ENCODE measurements at regions of chr16 and their contacts with region 1.

Region 1: DNA sequence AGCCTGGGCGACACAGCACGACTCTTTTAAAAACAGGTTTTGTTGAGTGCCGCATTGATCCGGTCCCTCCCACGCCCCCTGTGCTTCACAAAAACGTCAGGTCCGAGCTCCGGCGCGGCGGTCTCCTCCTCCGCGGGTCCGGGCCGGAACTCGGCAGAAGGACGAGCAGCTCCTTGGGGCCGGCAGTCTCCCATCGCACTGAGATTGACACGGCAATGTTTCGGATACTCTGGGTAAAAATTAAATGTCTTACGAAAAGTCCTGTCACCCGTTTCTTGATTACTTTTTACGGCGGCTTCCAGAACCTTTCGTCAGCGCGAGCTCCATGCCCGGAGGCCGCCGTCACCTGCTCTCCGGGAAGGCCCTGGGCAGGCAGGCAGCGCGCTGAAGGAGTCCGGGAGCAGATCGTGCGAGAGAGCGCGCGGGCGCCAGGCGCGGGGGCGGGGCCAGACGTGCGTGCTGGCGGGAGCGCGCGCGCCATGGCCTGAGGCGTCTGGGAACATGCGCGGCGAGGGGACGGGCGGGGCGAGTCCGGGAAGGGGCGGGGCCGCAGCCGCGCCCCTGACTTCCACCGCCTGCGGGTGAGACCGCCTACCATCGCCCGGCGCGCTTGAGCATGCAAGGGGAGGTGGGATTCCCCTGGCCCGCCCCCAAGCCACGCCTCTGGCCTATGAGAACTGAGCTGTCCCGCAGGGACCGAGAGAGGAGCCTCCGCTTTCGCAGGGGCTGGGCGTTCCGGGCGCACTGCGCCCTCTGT is 11.7 kb upstream of the SRL start:
- DNase-seq: peak; percentile 100
- ATAC-seq: peak; percentile 99
- H3K4me3 Mint-ChIP-seq: peak overlapping the region; percentile 94
- H3K27ac Mint-ChIP-seq: peak overlapping the region; percentile 97
- H3K4me1 Mint-ChIP-seq: peaks cover 11% of the 10 kb centered on the region
- H3K27me3 Mint-ChIP-seq: no peaks in the 10 kb centered on the region

Region 2: DNA sequence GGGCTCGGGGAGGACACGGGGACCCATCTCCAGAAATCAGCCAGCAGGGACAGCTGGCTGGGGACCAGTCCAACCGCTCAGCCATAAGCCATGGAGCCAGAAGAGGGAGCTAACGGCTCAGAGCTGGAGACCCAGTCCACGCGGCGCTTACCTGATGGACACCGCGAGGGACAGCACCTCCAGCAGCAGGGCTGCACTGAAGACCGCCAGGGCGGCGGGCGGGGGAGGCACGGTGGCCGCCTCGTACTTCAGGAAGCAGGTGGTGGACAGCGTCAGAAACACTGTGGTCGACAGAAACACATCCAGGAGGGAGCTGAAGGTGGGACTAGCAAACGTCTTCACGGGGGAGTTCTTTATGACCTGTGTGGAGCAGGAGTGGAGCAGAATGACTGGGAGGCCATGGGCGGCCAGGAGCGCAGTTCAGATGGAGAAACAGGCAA is 270.5 kb before region 1 on chr16:
- CTCF ChIA-PET with region 1: interaction called, 30 read pairs
- POLR2A ChIA-PET with region 1: no interaction called
- DNase-seq: peak; percentile 48
- ATAC-seq: peak; percentile 58
- H3K4me3 Mint-ChIP-seq: no peak overlapping the region
- H3K27ac Mint-ChIP-seq: no peak overlapping the region
- H3K4me1 Mint-ChIP-seq: peaks cover 4% of the 10 kb centered on the region
- H3K27me3 Mint-ChIP-seq: no peaks in the 10 kb centered on the region

Region 3: GRCh38 chr16:4160658-4161430 is 92.7 kb before region 1 on chr16:
- CTCF ChIA-PET with region 1: no interaction called
- POLR2A ChIA-PET with region 1: no interaction called
- DNase-seq: no peak
- ATAC-seq: no peak
- H3K4me3 Mint-ChIP-seq: no peak overlapping the region
- H3K27ac Mint-ChIP-seq: no peak overlapping the region
- H3K4me1 Mint-ChIP-seq: no peaks in the 10 kb centered on the region
- H3K27me3 Mint-ChIP-seq: peaks cover 7% of the 10 kb centered on the region

Region 4: GRCh38 chr16:4232541-4233386 is 20.8 kb before region 1 on chr16:
- CTCF ChIA-PET with region 1: interaction called, 11 read pairs
- POLR2A ChIA-PET with region 1: no interaction called
- DNase-seq: no peak
- ATAC-seq: no peak
- H3K4me3 Mint-ChIP-seq: no peak overlapping the region
- H3K27ac Mint-ChIP-seq: no peak overlapping the region
- H3K4me1 Mint-ChIP-seq: no peaks in the 10 kb centered on the region
- H3K27me3 Mint-ChIP-seq: peaks cover 1% of the 10 kb centered on the region

Region 5: GRCh38 chr16:4307215-4308037 is 53.9 kb after region 1 on chr16:
- CTCF ChIA-PET with region 1: interaction called, 17 read pairs
- POLR2A ChIA-PET with region 1: interaction called, 3 read pairs
- DNase-seq: peak; percentile 97
- ATAC-seq: peak; percentile 96
- H3K4me3 Mint-ChIP-seq: peak overlapping the region; percentile 98
- H3K27ac Mint-ChIP-seq: peak overlapping the region; percentile 98
- H3K4me1 Mint-ChIP-seq: peaks cover 43% of the 10 kb centered on the region
- H3K27me3 Mint-ChIP-seq: no peaks in the 10 kb centered on the region

Region 6: GRCh38 chr16:4339909-4340308 is 86.3 kb after region 1 on chr16:
- CTCF ChIA-PET with region 1: no interaction called
- POLR2A ChIA-PET with region 1: no interaction called
- DNase-seq: no peak
- ATAC-seq: no peak
- H3K4me3 Mint-ChIP-seq: no peak overlapping the region
- H3K27ac Mint-ChIP-seq: no peak overlapping the region
- H3K4me1 Mint-ChIP-seq: peaks cover 6% of the 10 kb centered on the region
- H3K27me3 Mint-ChIP-seq: no peaks in the 10 kb centered on the region

Region 7: DNA sequence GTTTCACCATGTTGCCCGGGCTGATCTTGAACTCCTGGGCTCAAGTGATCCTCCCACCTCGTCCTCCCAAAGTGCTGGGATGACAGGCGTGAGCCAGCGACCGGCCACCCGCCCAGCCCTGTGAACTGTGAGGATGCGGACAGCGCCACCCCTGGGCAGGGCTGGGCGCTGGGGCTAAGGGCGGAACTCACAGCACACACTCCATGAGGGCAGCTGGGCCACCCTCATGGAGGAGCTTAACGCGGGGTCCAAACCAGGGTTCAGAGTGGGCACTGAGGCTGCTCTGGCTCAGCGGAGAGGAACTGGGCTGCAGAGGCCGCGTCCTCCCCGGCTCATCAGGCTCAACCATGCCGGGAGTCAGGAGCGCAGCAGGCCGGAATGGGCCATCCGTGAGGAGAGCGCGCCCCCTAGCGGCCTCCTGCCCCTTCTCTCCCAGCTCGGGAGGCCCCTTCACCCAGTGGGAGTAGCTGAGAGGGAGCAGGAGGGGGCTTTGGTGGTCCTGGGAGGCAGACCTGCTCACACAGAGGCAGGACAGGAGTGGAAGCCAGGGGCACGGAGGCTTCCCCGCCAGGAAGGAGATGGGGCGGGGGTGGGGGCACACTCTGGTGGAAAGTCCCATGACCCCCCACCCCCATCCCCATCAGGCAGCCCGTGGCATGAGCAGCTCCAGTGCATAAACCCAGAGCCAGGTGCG is 149.0 kb after region 1 on chr16:
- CTCF ChIA-PET with region 1: interaction called, 12 read pairs
- POLR2A ChIA-PET with region 1: no interaction called
- DNase-seq: peak; percentile 72
- ATAC-seq: peak; percentile 57
- H3K4me3 Mint-ChIP-seq: no peak overlapping the region
- H3K27ac Mint-ChIP-seq: no peak overlapping the region
- H3K4me1 Mint-ChIP-seq: peaks cover 5% of the 10 kb centered on the region
- H3K27me3 Mint-ChIP-seq: no peaks in the 10 kb centered on the region

Measured in activated CD8-positive, alpha-beta T cell treated with anti-CD3 and anti-CD28 coated beads, Interleukin-2, amount 10 ng/mL, durations not matched to agents 7 days and 5 days (primary cell).